Ascending aorta (tissue), 2 donors: ENCODE measurements at regions of chrX and their contacts with region 1.

Region 1: DNA sequence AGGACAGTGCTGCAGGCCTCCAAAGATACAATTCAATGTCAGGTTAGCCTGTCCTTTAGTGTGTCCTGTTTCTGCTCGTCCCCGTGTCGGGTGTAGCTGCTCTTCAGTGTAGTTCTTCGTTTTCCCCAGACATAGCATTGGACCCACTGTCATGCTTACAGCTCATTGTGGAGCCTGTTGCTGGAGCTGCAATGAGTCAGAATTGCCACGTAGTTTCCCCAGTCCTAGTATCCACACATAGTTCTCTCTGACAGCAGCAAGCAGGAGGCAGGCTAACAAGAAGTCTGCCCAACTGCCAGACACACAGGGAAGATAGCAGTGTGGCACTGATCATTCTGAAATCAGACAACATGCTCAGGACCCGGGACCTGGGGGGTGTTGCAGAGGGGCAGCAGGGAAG is 49.2 kb downstream of the MOSPD2 start:
- DNase-seq: no peak
- H3K4me3 ChIP-seq: no peak overlapping the region
- H3K27ac ChIP-seq: peak overlapping the region; percentile 32 to 59
- H3K4me1 ChIP-seq: no peaks in the 10 kb centered on the region
- H3K27me3 ChIP-seq: no peaks in the 10 kb centered on the region
- CTCF ChIP-seq: no peak

Region 2: GRCh38 chrX:14872851-14873675 is 49.4 kb before region 1 on chrX and contains the starts of genes FANCB and MOSPD2:
- intact Hi-C with region 1: loop called (anchors 5 kb)
- DNase-seq: peak; percentile 81 to 96
- H3K4me3 ChIP-seq: peak within 1 kb of the TSS; percentile 83 to 90
- H3K27ac ChIP-seq: peak within 1 kb of the TSS; percentile 77 to 80
- H3K4me1 ChIP-seq: no peaks in the 10 kb centered on the region
- H3K27me3 ChIP-seq: no peaks in the 10 kb centered on the region
- CTCF ChIP-seq: no peak
- total RNA-seq, gene FANCB: not detected
- total RNA-seq, gene MOSPD2: 15.0 TPM

Region 3: GRCh38 chrX:14963447-14964236 is 41.2 kb after region 1 on chrX:
- intact Hi-C with region 1: no loop called
- DNase-seq: no peak
- H3K4me3 ChIP-seq: no peak overlapping the region
- H3K27ac ChIP-seq: no peak overlapping the region
- H3K4me1 ChIP-seq: no peaks in the 10 kb centered on the region
- H3K27me3 ChIP-seq: no peaks in the 10 kb centered on the region
- CTCF ChIP-seq: no peak